Panc1 (cell line): ENCODE measurements at regions of chr5 and their contacts with region 1.

Region 1: DNA sequence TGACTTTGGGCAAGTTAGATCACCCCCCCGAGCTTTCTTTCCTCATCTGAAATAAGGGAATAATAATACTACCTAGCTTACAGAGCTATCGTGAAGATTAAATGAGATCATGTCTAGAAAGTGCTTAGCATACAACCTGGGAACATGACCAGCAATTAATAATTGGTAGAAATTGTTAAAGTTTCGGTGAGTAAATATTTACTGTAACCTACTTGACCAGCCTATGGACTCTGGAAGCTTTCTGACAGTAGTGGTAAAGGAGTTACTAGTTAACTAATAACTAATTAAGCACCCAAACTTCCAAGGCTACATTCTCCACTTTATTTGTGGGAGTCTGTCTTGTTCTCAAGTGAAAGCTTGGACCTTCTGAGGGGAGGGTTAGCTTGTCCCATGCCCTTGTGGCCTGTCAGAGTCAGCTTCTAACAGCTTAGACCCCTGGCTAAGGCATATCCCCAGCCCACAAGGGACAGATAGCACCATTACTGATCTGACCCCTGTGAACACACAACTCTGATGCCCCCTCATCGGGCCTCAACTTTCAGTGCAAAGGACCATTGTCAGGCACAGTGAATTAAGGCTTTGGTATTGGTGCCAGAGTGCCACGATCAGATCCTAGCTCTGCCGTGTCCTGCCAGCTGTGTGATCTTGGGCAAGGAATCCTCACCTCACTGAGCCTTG is 58.7 kb upstream of the SAP30L start:
- DNase-seq: no peak
- ATAC-seq: no peak
- H3K4me3 ChIP-seq: no peak overlapping the region
- H3K27ac ChIP-seq: no peak overlapping the region
- H3K4me1 ChIP-seq: no peaks in the 10 kb centered on the region
- H3K27me3 ChIP-seq: no peaks in the 10 kb centered on the region
- CTCF ChIP-seq: no peak

Region 2: DNA sequence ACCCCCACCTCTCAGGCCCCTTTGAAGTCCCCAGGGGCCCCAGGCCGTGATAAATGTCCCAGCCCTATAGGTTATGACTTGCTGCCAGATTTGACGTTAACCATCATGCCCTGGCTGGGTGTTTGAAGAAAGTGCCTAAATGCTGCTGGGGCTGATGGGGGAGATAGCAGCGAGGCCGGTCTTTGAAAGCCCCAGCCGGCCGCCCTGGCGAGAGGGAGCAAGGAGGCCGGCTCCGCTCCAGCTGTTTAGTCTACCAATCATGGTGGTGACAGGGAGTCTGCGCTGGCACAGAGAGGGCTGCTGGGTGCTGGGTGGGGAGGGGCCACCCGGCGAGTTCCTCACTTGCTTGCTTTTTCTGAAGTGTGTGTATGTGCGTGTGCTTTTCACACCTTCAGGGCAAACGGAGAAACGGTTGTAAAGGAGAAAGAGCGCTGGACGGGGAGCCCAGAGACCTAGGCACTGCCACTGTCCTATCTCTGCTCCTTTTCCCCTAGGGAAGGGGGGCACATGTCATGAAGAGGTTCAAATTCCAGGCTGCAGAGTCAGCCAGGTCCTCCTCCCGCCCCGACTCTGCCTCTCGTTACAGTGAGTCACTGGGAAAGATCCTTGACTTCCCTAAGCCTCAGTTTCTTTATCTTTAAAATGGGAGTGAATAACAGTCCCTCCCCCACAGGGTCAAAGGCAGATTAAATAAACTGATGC is 217.0 kb after region 1 on chr5:
- CTCF ChIA-PET with region 1: interaction called, 13 read pairs
- POLR2A ChIA-PET with region 1: no interaction called
- in situ Hi-C with region 1: no loop called
- intact Hi-C with region 1: no loop called
- DNase-seq: no peak
- ATAC-seq: peak; percentile 59
- H3K4me3 ChIP-seq: 0 out of 4 replicates have a peak overlapping the region, but pooled peaks of 1 of the 2 experiments have one; percentile 2
- H3K27ac ChIP-seq: no peak overlapping the region
- H3K4me1 ChIP-seq: 0 out of 2 replicates have a peak, but pooled peaks cover 6% of the 10 kb centered on the region
- H3K27me3 ChIP-seq: no peaks in the 10 kb centered on the region
- CTCF ChIP-seq: no peak

Region 3: GRCh38 chr5:154712518-154713381 is 325.7 kb after region 1 on chr5:
- CTCF ChIA-PET with region 1: no interaction called
- POLR2A ChIA-PET with region 1: no interaction called
- in situ Hi-C with region 1: no loop called
- intact Hi-C with region 1: no loop called
- DNase-seq: no peak
- ATAC-seq: peak; percentile 76
- H3K4me3 ChIP-seq: peak overlapping the region in 1 of 2 experiments; percentile 22; a peak in 1 of 4 replicates
- H3K27ac ChIP-seq: peak overlapping the region; percentile 39
- H3K4me1 ChIP-seq: peaks cover 29% of the 10 kb centered on the region
- H3K27me3 ChIP-seq: no peaks in the 10 kb centered on the region
- CTCF ChIP-seq: no peak